ENCODE measurements at regions of chr10 and their contacts with region 1.

Region 1: GRCh38 chr10:46106410-46107255 is 60.6 kb upstream of the MSMB start:
- DNase-seq: peak; percentile 72
- H3K4me3 Mint-ChIP-seq: peak overlapping the region; percentile 83
- H3K27ac Mint-ChIP-seq: peak overlapping the region; percentile 12
- H3K4me1 Mint-ChIP-seq: peaks cover 14% of the 10 kb centered on the region
- H3K27me3 Mint-ChIP-seq: no peaks in the 10 kb centered on the region

Region 2: DNA sequence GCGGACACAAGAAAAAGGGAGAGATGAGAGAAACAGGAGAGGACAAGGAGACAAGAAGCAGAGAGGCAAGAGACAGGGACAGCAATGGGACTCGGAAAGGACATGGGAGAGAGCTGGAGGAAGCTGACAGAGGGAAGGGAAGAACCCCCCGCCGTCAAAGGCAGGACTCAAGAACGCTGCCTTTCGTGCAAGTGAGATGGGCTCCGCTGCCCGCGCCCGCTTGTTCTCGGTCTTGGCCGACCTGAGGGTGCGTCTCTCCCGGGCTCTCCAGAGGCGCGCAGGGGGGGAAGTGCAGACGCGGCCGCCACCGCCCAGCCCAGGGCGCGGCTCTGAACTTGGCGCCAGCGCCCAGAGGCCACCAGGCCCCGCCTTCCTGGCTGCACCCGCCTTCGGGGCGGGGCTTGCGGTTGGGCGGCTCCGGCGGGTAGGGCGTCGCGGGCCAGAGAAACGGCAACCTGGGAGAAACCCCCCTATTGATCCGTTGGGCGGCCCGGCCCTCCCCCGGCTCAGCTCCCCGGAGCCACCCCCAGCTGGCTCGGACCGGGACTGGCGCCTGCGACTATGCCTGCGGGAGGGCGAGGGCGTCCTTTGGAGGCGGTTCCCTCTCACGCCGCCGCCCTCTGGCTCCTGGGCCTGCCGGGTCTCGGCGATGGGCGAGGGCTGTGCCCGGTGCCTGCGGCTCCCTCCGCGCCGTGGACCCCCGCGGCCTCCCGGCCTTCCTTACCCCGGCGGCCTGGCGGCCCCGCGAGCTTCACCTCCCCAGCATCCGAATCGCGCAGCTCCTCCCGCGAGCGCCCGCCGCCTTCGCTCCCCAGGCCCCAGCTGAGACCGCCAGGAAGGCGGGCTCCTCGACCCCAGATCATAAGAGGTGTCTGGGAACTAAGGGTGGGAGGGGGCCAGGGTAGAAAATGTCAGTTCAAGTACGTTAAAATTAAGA is 177.9 kb after region 1 on chr10:
- CTCF ChIA-PET with region 1: no interaction called
- POLR2A ChIA-PET with region 1: interaction called, 7 read pairs
- intact Hi-C with region 1: loop called (anchors 5 kb)
- DNase-seq: peak; percentile 88
- H3K4me3 Mint-ChIP-seq: peak overlapping the region; percentile 85
- H3K27ac Mint-ChIP-seq: peak overlapping the region; percentile 39
- H3K4me1 Mint-ChIP-seq: peaks cover 20% of the 10 kb centered on the region
- H3K27me3 Mint-ChIP-seq: peaks cover 1% of the 10 kb centered on the region

Region 3: DNA sequence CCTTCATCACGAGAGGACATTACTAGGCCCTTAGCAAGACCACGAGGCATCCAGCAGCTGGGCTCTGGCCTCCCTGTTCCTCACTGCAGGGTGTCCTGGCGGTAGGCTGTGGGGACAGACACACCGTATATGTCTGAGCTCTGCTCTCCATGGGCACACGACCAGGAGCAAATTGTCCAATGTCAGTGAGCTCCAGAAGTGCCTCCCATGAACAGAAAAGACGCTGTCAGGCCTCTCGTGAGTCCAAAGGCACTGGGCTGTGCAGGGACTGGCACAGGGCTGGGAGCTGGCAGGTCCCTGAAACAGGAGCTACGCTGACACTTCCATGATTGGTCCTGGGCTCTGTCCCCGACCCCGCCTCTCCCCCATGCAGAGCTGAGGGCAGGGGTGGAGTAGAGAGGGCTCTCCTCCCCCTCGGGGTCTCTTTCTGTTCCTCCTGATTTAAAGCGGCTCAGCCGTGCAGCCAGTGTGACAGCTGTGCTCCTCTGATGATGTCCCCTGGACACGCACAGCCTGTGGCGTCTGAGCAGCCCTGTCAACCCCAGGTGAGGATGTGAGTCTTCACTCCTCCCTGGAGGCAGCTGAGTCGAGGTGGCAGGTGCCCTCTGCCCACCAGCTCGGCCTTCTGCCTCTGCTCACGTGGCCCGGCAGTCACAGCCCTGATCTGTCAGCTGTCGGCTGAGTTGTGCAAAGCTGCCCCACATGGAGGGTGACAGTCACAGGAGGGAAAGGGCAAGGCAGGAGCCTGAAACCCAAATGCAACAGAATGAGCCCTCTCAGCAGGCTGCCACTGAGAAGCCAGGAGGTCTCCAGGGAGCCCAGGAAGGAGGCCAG is 193.1 kb after region 1 on chr10:
- CTCF ChIA-PET with region 1: no interaction called
- POLR2A ChIA-PET with region 1: no interaction called
- intact Hi-C with region 1: no loop called
- DNase-seq: no peak
- H3K4me3 Mint-ChIP-seq: no peak overlapping the region
- H3K27ac Mint-ChIP-seq: no peak overlapping the region
- H3K4me1 Mint-ChIP-seq: peaks cover 24% of the 10 kb centered on the region
- H3K27me3 Mint-ChIP-seq: no peaks in the 10 kb centered on the region

Measured in activated CD4-positive, alpha-beta memory T cell treated with anti-CD3 and anti-CD28 coated beads for 36 hours (primary cell).